ENCODE measurements at regions of chr1 and their contacts with region 1.

Region 1: GRCh38 chr1:205977402-205978014 is 25.7 kb downstream of the RAB7B start:
- DNase-seq: peak; percentile 47 to 85 (median 78)
- ATAC-seq: peak; percentile 68
- H3K4me3 ChIP-seq: no peak overlapping the region
- H3K4me3 Mint-ChIP-seq: no peak overlapping the region
- H3K27ac ChIP-seq: no peak overlapping the region
- H3K27ac Mint-ChIP-seq: no peak overlapping the region
- H3K4me1 ChIP-seq: no peaks in the 10 kb centered on the region
- H3K4me1 Mint-ChIP-seq: no peaks in the 10 kb centered on the region
- H3K27me3 ChIP-seq: peaks cover 0 to 6% of the 10 kb centered on the region in 2 experiments
- H3K27me3 Mint-ChIP-seq: no peaks in the 10 kb centered on the region
- CTCF ChIP-seq: peak; percentile 87

Region 2: DNA sequence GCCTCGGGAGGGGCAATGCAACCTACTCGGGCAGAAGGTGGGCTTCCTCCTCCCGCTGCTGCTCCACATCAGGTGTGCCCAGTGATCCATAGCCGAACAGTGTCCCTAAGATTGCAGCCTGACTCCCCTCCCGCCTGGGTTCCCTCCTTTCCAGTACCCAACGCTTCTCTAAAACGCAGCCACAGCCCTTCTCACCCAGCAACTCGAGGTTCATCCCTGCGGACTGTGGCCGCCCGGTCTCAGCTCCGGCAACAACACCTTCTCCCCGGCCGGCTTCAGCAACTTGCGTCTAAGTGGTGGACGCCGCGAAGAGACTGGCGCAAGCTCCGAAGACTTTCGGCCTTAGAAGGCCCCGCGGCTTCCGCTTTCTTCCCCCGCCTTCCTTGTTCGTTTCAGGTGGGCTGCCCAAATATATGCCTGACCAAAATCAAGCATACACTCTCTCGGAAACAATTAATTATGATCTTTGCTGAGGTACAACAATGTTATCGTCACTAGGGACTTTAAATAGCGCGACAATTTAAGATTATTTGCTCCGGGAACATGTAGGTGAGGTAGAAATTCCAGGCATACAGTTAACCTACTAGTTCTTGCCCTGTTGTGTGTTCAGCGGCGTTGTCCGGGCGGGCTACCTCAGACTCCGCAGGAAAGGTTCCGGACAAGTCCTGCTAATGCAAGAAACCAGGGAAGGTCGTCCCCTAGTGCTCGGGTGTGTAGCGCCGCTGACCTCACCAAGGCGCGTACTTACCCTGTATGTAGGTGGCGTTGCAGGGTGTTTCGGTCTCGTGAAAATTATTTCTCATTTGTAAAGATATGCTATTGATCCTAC is 855.6 kb before region 1 on chr1 and contains the start of gene RBBP5:
- CTCF ChIA-PET with region 1: no interaction called
- POLR2A ChIA-PET with region 1: no interaction called
- intact Hi-C with region 1: no loop called
- DNase-seq: peak; percentile 92 to 98 (median 95)
- ATAC-seq: peak; percentile 93
- H3K4me3 ChIP-seq: peak within 1 kb of the TSS; percentile 91 to 95
- H3K4me3 Mint-ChIP-seq: peak within 1 kb of the TSS; percentile 96
- H3K27ac ChIP-seq: peak within 1 kb of the TSS; percentile 88 to 97
- H3K27ac Mint-ChIP-seq: peak within 1 kb of the TSS; percentile 100
- H3K4me1 ChIP-seq: peaks cover 26% of the 10 kb centered on the region
- H3K4me1 Mint-ChIP-seq: peaks cover 46% of the 10 kb centered on the region
- H3K27me3 ChIP-seq: no peaks in the 10 kb centered on the region
- H3K27me3 Mint-ChIP-seq: no peaks in the 10 kb centered on the region
- CTCF ChIP-seq: peak; percentile 59
- total RNA-seq, gene RBBP5: 23.9 to 25.7 TPM

Region 3: GRCh38 chr1:205528887-205529825 is 448.4 kb before region 1 on chr1:
- CTCF ChIA-PET with region 1: interaction called, 3 read pairs
- POLR2A ChIA-PET with region 1: no interaction called
- intact Hi-C with region 1: loop called in 1 of 2 experiments (anchors 2 kb)
- DNase-seq: peak; percentile 68 to 92 (median 80)
- ATAC-seq: peak; percentile 90
- H3K4me3 ChIP-seq: peak overlapping the region in 1 of 2 experiments; percentile 26
- H3K4me3 Mint-ChIP-seq: peak overlapping the region; percentile 58
- H3K27ac ChIP-seq: no peak overlapping the region
- H3K27ac Mint-ChIP-seq: no peak overlapping the region
- H3K4me1 ChIP-seq: no peaks in the 10 kb centered on the region
- H3K4me1 Mint-ChIP-seq: peaks cover 5% of the 10 kb centered on the region
- H3K27me3 ChIP-seq: no peaks in the 10 kb centered on the region
- H3K27me3 Mint-ChIP-seq: no peaks in the 10 kb centered on the region
- CTCF ChIP-seq: peak; percentile 90

Region 4: DNA sequence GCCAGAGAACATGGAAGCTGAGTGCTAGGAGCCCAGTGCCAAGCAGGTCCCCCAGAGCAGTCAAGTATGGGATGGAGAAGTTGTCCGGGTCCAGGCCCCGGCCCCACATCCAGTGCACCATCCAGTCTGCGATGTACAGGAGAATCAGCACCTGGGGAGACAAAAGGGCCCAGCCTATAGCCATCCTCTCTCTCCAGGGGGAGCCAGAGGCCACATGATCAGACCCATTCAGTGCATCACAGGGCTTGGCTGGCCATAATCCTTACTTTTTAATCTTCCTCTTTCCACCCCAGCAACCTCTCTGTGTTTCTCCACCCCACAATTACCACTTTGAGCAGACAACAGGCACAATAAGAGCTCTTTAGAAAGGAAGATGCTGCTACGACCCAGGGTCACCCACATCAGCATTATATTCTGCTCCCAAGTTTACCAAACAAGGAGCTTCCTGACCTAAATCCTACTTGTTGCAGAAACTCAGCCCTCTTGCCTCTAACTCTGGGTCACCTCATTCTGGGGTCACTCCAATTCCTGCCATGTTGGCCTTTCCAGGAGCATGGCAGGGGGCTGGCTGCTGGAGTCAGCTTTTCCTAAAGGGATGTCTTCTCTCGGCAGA is 185.8 kb before region 1 on chr1:
- CTCF ChIA-PET with region 1: interaction called, 272 read pairs
- POLR2A ChIA-PET with region 1: interaction called, 6 read pairs
- intact Hi-C with region 1: loop called in 1 of 2 experiments (anchors 1 kb)
- DNase-seq: peak; percentile 26 to 75 (median 65)
- ATAC-seq: peak; percentile 86
- H3K4me3 ChIP-seq: no peak overlapping the region
- H3K4me3 Mint-ChIP-seq: no peak overlapping the region
- H3K27ac ChIP-seq: no peak overlapping the region
- H3K27ac Mint-ChIP-seq: no peak overlapping the region
- H3K4me1 ChIP-seq: no peaks in the 10 kb centered on the region
- H3K4me1 Mint-ChIP-seq: no peaks in the 10 kb centered on the region
- H3K27me3 ChIP-seq: no peaks in the 10 kb centered on the region
- H3K27me3 Mint-ChIP-seq: no peaks in the 10 kb centered on the region
- CTCF ChIP-seq: peak; percentile 72

Region 5: GRCh38 chr1:205919026-205919746 is 58.3 kb before region 1 on chr1:
- CTCF ChIA-PET with region 1: interaction called, 60 read pairs
- POLR2A ChIA-PET with region 1: no interaction called
- intact Hi-C with region 1: loop called (anchors 1 kb)
- DNase-seq: peak; percentile 42 to 75 (median 64)
- ATAC-seq: peak; percentile 63
- H3K4me3 ChIP-seq: no peak overlapping the region
- H3K4me3 Mint-ChIP-seq: no peak overlapping the region
- H3K27ac ChIP-seq: no peak overlapping the region
- H3K27ac Mint-ChIP-seq: no peak overlapping the region
- H3K4me1 ChIP-seq: no peaks in the 10 kb centered on the region
- H3K4me1 Mint-ChIP-seq: no peaks in the 10 kb centered on the region
- H3K27me3 ChIP-seq: no peaks in the 10 kb centered on the region
- H3K27me3 Mint-ChIP-seq: peaks cover 10% of the 10 kb centered on the region
- CTCF ChIP-seq: peak; percentile 75

Region 6: DNA sequence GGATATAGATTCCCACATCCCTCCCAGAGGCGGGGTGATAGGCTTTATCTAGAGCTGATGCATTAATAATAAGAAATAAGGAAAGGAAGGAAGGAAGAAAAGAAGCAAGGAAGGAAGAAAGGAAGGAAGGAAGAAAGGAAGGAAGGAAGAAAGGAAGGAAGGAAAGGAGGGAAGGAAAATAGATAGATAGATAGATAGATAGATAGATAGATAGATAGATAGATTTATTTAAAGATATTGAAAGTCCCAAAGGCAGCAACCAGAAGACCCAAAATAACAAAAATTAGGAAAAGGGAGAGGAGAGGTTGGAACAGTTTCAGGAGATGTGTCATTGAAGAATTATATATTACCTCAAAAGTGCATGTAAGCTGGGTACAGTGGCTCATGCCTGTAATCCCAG is 22.0 kb before region 1 on chr1:
- CTCF ChIA-PET with region 1: interaction called, 18 read pairs
- POLR2A ChIA-PET with region 1: no interaction called
- intact Hi-C with region 1: no loop called
- DNase-seq: no peak
- ATAC-seq: no peak
- H3K4me3 ChIP-seq: no peak overlapping the region
- H3K4me3 Mint-ChIP-seq: no peak overlapping the region
- H3K27ac ChIP-seq: no peak overlapping the region
- H3K27ac Mint-ChIP-seq: no peak overlapping the region
- H3K4me1 ChIP-seq: no peaks in the 10 kb centered on the region
- H3K4me1 Mint-ChIP-seq: no peaks in the 10 kb centered on the region
- H3K27me3 ChIP-seq: no peaks in the 10 kb centered on the region
- H3K27me3 Mint-ChIP-seq: peaks cover 8% of the 10 kb centered on the region
- CTCF ChIP-seq: no peak

Region 7: DNA sequence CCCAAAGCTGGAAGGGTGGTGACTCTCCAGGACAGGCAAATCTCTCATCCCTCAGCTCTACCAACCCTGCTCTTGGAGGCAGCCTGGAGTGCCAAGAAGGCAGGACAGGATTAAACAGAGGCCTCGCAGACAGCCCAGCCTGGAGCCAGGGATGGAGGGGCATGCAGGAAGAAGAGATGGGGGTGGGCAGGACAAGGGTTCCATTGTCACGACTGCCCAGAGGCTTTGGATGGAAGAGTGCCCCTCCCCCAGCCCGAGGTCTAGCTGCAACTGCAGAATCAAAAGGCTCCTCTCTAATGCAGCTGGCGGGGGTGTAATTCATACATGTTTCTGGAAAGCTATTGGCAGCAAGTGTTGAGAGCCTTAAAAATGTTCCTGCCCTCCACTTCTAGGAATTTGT is 16.8 kb after region 1 on chr1:
- CTCF ChIA-PET with region 1: interaction called, 38 read pairs
- POLR2A ChIA-PET with region 1: no interaction called
- intact Hi-C with region 1: no loop called
- DNase-seq: no peak
- ATAC-seq: no peak
- H3K4me3 ChIP-seq: no peak overlapping the region
- H3K4me3 Mint-ChIP-seq: no peak overlapping the region
- H3K27ac ChIP-seq: no peak overlapping the region
- H3K27ac Mint-ChIP-seq: no peak overlapping the region
- H3K4me1 ChIP-seq: no peaks in the 10 kb centered on the region
- H3K4me1 Mint-ChIP-seq: no peaks in the 10 kb centered on the region
- H3K27me3 ChIP-seq: no peaks in the 10 kb centered on the region
- H3K27me3 Mint-ChIP-seq: peaks cover 9% of the 10 kb centered on the region
- CTCF ChIP-seq: no peak

Region 8: GRCh38 chr1:206048582-206048981 is 71.1 kb after region 1 on chr1:
- CTCF ChIA-PET with region 1: no interaction called
- POLR2A ChIA-PET with region 1: no interaction called
- intact Hi-C with region 1: no loop called
- DNase-seq: no peak
- ATAC-seq: no peak
- H3K4me3 ChIP-seq: no peak overlapping the region
- H3K4me3 Mint-ChIP-seq: no peak overlapping the region
- H3K27ac ChIP-seq: no peak overlapping the region
- H3K27ac Mint-ChIP-seq: no peak overlapping the region
- H3K4me1 ChIP-seq: no peaks in the 10 kb centered on the region
- H3K4me1 Mint-ChIP-seq: peaks cover 11% of the 10 kb centered on the region
- H3K27me3 ChIP-seq: no peaks in the 10 kb centered on the region
- H3K27me3 Mint-ChIP-seq: peaks cover 3% of the 10 kb centered on the region
- CTCF ChIP-seq: no peak

Region 9: DNA sequence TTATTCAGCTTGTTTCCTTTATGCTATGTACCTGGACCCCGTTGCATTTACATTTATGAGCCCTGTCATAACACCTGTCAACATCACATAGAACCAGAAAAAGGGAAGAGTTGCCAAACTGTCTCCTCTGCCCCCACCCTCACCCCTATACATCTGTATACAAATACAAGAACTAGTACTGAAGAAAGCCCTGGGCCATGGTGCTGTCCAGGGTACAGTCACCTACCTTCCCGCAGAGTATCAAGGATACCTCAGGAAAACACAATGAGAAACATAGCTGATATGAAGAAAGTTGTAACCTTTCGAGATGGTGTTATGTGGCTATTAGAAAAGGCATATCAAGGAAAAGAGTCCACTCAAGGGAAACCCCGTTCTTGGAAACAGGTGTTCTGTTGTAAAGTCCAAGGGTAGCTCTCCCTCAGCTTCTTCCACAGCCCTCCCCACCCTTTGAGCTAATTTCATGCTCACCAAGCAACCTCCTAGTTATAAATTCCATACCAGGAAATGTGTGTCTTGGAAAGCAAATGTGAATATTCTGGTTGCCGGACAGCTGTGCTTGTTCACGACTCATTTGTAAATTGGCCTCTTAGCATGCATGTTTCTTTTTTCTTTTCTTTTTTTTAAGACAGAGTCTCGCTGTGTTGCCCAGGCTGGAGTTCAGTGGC is 156.4 kb after region 1 on chr1:
- CTCF ChIA-PET with region 1: no interaction called
- POLR2A ChIA-PET with region 1: no interaction called
- intact Hi-C with region 1: no loop called
- DNase-seq: no peak
- ATAC-seq: no peak
- H3K4me3 ChIP-seq: no peak overlapping the region
- H3K4me3 Mint-ChIP-seq: no peak overlapping the region
- H3K27ac ChIP-seq: no peak overlapping the region
- H3K27ac Mint-ChIP-seq: no peak overlapping the region
- H3K4me1 ChIP-seq: no peaks in the 10 kb centered on the region
- H3K4me1 Mint-ChIP-seq: no peaks in the 10 kb centered on the region
- H3K27me3 ChIP-seq: no peaks in the 10 kb centered on the region
- H3K27me3 Mint-ChIP-seq: peaks cover 2% of the 10 kb centered on the region
- CTCF ChIP-seq: no peak